AG04449 (cell line): ENCODE measurements at regions of chr13 and their contacts with region 1.

Region 1: DNA sequence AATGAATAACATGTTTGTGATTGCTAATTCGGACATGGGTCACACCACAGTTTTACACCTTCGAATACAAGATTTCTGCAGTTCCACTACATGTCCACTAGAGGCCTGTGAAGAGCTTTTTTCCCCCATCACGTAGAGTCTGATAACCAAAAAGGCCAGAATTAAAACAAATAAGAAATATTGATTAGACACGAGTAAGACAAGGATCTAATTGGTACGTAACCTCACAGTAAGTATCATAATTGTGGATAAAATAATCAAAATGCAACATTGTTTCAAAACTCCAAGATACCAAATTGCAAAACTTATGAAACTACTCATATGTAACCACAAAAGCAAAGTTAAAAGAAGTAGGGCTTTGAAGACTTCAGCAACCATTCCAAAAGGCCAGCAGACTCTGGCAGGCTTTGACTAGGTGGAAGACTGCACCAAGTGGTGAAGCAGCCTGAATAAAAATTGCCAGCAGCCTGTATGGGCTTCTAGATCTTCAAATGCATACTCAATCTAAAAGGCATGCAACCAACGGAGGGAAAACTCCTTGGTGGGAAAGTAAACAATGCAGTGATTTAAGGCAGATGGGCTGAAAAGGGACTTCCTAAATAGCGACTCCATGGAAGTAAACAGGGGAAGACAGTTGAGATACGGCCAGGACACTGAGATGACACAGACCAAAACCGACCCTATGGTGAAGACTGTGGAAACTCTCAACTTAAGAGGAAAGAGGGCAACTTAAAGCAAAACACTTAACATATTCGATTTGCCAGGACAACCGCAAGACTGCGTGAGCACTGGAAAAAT is 56.7 kb downstream of the STARD13 start:
- DNase-seq: no peak
- H3K4me3 ChIP-seq: no peak overlapping the region; the same call in 1 of the 2 replicates
- CTCF ChIP-seq: peak; percentile 67

Region 2: DNA sequence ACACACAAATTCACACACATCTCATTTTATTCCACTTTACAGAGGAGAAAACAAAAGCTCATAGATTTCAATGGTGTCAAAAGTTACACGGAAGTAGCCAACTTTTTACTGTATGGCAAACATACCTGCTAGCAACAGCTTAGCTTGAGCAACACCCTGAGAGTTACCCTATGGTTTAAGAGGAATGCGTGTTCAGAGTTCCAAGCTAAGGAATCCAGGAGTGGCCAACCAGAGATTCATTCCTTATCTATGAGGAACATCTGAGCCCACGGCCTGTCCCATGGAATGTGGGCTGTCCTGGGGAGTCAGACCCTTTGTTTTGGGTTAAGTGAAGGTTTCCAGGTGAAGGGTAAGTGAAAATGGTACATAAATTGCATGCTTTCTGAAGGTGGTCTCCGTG is 10.8 kb before region 1 on chr13:
- CTCF ChIA-PET with region 1: interaction called, 14 read pairs
- POLR2A ChIA-PET with region 1: no interaction called
- DNase-seq: no peak
- H3K4me3 ChIP-seq: no peak overlapping the region
- CTCF ChIP-seq: no peak

Region 3: DNA sequence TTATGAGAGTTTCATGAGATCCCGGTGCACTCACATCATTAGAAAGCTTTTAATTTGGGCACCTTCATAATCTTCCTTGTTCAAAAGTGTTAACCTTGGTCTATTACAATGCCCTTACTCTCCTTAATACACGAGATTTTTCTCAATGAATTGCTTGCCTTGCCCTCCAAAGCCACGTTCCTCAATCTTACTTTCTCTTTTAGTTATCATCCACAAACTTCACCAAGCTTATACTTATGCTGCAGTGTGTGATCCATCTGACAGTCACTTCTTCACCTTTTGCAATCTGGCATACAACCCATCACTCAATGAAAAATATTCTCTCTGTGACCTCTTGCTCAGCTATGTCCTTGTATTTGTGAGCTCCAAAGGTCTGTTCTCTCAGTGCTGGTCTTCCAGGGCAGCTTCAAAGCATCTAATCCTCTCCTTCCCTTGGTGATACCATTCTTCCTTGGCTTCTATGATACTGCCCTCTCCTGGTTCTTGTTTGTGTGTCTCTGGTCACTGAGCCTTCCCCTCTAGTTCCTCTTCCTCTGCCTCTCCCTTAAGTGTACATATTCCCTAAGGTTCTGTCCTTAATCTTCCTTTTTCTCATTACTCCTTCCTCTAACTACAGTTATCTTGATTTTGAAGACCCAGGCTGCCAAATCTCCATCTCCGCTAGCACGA is 258.9 kb after region 1 on chr13:
- CTCF ChIA-PET with region 1: interaction called, 13 read pairs
- POLR2A ChIA-PET with region 1: no interaction called
- DNase-seq: no peak
- H3K4me3 ChIP-seq: no peak overlapping the region
- CTCF ChIP-seq: peak; percentile 27

Region 4: DNA sequence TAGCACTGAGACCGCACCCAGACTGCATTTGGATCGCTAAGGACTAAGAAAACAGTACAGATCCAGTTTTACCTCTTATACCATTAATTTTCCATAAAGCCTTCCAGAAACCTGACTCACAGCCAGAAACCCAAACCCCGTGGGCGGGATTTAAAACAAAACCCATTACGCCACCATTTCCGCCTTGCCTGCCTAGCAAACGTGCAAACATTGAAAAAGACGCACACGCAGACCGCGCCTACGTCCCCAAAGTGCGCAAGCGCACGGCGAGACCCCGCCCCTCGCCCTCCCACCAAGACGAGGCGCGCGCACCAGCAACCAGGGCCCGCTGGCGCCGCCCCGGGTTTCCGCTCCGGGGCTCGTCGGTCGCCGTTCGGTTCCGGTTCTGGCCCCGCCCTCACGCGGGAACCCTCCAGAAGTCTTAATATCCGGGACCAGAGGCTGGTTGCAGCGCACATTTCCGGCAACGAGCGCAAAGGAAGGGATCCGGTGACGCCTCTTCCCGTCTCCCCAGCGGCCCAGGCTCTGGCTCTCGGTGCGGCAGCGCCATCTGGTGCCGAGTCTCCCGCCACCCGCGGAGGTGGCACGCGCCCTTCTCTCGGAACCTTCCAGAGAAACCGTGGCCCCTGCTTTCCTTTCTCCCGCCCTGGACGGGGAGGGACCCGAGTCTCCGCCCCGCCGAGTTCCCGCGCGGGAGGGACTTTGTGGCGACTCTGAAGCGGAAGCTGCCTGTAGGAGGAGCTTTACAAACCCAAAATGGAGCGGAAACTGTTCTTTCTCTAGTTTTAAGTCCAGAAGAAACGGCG is 313.6 kb after region 1 on chr13:
- CTCF ChIA-PET with region 1: interaction called, 12 read pairs
- POLR2A ChIA-PET with region 1: no interaction called
- DNase-seq: peak; percentile 96
- H3K4me3 ChIP-seq: peak overlapping the region; percentile 59
- CTCF ChIP-seq: peak; percentile 95

Region 5: GRCh38 chr13:33642374-33643068 is 413.7 kb after region 1 on chr13:
- CTCF ChIA-PET with region 1: no interaction called
- POLR2A ChIA-PET with region 1: no interaction called
- DNase-seq: no peak
- H3K4me3 ChIP-seq: no peak overlapping the region
- CTCF ChIP-seq: no peak